ENCODE measurements at regions of chr5 and their contacts with region 1.

Region 1: DNA sequence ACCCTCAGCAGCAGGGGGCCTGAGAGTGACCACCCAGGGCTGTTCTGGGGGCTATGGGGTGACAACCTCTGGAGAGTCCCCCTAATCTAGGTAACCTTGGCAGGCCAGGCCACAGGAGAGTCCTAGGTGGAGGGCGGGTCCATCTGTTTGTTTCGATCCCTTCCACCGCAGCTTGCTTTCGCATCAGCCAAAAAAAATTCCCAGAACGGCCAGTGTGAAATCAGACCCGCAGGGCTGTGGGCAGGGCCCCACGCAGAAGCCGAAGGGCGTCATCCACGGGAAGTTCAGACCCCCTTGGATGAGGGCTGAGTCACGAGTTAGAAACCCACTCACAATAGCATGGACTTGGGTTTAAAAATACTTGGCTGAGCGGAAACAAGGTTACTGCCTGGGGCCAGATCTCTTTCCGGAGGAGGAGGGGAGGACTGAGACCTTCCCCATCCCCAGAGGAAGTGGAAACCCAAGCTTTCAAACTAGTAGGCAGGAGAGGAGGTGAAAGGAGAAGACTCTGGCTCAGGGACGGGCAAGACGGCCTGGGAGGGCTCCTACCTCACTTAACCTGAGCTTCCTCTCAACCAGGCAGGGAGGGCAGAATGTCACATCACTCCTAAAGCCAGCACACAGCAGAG is 8.5 kb downstream of the STK10 start:
- DNase-seq: peak; percentile 67
- H3K4me3 Mint-ChIP-seq: peak overlapping the region; percentile 70
- H3K27ac Mint-ChIP-seq: peak overlapping the region; percentile 94
- H3K4me1 Mint-ChIP-seq: peaks cover 92% of the 10 kb centered on the region
- H3K27me3 Mint-ChIP-seq: no peaks in the 10 kb centered on the region

Region 2: DNA sequence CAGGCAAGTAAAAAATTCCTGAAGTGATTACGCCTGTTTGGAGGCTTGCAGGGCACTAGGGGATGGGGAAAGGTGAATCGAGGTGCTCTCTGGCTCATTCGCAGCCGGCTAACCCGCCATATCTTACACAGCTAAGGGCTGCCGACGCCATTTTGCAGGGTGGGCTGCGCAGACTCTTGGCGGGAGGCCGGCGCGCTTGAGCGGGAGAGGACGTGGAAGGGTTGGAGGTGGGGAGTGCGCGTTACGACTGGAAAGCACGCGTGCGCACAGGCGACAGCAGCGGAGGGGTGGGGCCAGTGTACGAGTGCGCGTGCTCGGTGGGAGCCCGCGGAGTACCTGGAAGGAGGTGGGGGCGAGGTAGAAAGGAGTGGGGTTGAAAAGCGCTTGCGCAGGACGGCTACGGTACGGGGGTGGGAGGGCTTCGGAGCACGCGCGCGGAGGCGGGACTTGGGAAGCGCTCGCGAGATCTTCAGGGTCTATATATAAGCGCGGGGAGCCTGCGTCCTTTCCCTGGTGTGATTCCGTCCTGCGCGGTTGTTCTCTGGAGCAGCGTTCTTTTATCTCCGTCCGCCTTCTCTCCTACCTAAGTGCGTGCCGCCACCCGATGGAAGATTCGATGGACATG is 792.0 kb before region 1 on chr5 and contains the start of gene NPM1:
- CTCF ChIA-PET with region 1: no interaction called
- intact Hi-C with region 1: loop called (anchors 1 kb)
- DNase-seq: peak; percentile 98
- H3K4me3 Mint-ChIP-seq: peak within 1 kb of the TSS; percentile 98
- H3K27ac Mint-ChIP-seq: peak within 1 kb of the TSS; percentile 98
- H3K4me1 Mint-ChIP-seq: peaks cover 37% of the 10 kb centered on the region
- H3K27me3 Mint-ChIP-seq: no peaks in the 10 kb centered on the region
- total RNA-seq, gene NPM1: 3,194 to 3,467 TPM

Region 3: GRCh38 chr5:172006321-172007174 is 172.9 kb before region 1 on chr5 and contains the start of gene FBXW11:
- CTCF ChIA-PET with region 1: interaction called, 7 read pairs
- intact Hi-C with region 1: loop called (anchors 1 kb)
- DNase-seq: peak; percentile 96
- H3K4me3 Mint-ChIP-seq: peak within 1 kb of the TSS; percentile 96
- H3K27ac Mint-ChIP-seq: peak within 1 kb of the TSS; percentile 99
- H3K4me1 Mint-ChIP-seq: peaks cover 46% of the 10 kb centered on the region
- H3K27me3 Mint-ChIP-seq: no peaks in the 10 kb centered on the region
- total RNA-seq, gene FBXW11: 32.8 to 35.5 TPM

Region 4: DNA sequence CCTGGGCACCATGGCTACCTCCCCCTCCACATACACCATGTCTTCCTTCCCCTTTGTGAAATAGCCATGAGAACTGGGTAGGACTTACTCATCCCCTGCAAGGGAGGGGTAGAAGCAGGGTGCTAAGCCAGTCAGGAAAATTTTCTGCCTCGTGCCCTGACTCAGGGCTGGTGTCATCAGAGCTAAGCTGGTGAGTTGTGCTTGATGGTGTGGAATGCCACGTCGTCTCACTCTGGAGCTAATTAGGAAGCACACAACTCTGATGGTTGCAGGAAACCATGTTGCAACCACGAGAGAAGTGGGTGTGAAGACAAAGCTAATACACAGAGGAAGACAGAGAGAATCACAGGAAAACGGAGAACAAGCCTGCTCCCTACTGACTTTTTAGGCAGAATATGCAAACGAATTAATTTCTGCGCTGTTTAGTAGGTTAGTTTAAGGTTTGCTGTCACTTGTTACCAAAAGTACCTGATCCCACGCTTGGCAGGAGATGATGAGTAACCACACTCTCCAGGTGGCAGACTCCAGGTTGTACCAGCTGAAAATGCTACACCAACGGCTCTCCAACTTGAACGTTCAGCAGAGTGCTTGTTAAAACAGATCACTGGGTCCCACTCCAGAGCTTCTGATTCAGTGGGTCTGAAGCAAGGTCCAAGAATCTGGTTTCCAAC is 46.0 kb before region 1 on chr5:
- CTCF ChIA-PET with region 1: interaction called, 3 read pairs
- intact Hi-C with region 1: loop called (anchors 1 kb)
- DNase-seq: peak; percentile 86
- H3K4me3 Mint-ChIP-seq: peak overlapping the region; percentile 53
- H3K27ac Mint-ChIP-seq: peak overlapping the region; percentile 88
- H3K4me1 Mint-ChIP-seq: peaks cover 61% of the 10 kb centered on the region
- H3K27me3 Mint-ChIP-seq: no peaks in the 10 kb centered on the region

Region 5: DNA sequence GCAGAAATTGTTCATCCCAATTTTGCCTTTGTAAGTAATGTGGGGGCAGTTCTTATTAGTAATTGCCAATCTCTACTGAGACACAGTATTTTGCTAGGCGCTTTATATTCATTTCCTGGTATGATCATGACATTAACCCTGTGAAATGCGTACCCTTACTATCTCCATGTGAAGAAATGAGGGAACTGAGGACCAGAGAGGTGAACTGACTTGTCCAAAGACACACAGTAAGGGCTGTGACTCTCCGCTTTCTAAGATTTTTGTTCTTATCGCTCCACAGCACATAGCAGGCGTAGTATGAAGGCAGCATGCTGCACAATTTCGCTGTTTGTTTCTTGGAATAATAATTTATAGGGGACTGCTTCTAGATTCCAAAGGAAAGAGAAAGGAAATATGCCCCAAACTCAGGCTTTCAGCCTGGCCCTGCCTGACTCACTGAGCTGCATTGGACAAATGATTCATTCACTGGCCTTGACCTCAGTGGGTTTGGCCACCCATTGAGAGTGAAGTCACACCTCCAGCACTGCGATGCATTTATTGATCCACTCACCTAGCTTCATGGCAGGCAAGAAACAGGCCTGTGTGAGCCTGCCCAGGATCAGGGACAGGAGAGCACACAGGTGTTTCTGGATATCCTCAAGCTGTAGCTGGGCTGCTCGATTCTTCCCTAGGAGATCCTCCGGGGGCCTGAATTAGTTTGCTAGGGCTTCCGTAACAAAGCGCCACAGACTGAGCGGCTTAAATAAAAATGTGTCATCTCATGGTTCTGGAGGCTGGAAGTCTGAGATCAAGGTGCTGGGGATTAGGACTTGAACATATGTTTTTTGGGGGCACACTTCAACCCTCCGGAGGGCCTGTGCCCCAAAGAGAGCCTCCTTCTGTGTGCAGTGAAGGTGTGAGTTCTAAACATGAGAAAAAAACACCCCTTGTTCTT is 598.7 kb after region 1 on chr5:
- CTCF ChIA-PET with region 1: no interaction called
- intact Hi-C with region 1: loop called (anchors 2 kb)
- DNase-seq: no peak
- H3K4me3 Mint-ChIP-seq: no peak overlapping the region
- H3K27ac Mint-ChIP-seq: peak overlapping the region; percentile 77
- H3K4me1 Mint-ChIP-seq: peaks cover 55% of the 10 kb centered on the region
- H3K27me3 Mint-ChIP-seq: no peaks in the 10 kb centered on the region